AG04450 (cell line): ENCODE measurements at regions of chr2 and their contacts with region 1.

Region 1: DNA sequence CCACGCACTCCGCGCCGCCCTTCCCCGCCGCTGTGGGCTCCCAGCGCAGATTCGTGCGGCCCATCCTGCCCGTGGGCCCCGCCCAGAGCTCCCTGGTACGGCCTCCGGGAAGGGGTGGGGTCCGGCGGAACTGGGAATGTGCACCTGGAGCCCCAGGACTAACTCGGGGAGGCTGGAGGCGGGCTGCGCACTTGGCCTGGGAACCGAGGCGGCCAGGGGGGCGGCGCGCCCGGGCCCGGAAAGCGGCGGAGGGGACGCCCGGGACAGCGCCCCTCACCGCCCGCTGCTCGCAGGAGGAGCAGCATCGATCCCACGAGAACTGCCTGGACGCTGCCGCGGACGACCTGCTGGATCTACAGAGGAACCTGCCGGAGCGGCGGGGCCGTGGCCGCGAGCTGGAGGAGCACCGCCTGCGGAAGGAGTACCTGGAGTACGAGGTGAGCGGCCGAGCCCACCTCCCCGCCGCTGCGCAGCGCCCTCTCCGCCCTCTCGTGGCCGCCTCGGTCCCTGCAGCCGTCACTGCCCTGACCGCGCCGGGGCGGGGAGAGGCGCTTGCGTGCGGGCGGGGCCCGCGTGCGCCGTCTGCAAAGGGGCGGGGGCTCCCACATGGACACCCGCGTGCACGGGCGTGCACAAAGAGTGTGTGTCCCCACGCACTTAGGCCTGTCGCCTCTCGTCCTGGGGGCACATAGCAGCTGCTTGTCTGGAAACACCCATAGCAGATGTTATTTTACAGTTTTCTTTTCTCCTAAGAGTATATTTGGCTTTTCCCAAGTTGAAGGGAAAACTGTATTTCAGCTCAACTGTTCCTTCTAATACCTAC is 25.2 kb downstream of the PSD4 start:
- DNase-seq: no peak
- H3K4me3 ChIP-seq: peak overlapping the region; percentile 71
- H3K27ac ChIP-seq: no peak overlapping the region
- H3K27me3 ChIP-seq: peaks cover 18% of the 10 kb centered on the region
- CTCF ChIP-seq: peak; percentile 78

Region 2: DNA sequence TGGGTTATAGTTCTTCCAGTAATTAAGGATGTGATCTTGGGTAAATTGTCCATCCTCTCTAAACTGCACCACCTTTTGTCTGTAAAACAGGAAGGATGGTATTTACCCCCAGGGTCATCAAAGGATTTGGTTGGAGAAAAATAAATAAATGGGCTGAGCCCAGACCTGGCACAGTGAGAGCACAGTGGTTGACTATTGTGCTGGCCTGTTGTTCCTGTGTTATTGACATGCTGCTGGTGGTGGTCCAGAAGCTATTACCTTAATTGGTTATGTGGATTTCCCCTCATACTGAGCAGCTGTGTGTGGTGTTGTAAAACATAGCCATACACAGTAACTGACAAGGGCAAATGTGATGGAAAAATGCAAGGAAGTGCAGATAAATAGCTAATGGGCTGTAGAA is 288.8 kb before region 1 on chr2:
- CTCF ChIA-PET with region 1: no interaction called
- POLR2A ChIA-PET with region 1: no interaction called
- DNase-seq: no peak
- H3K4me3 ChIP-seq: no peak overlapping the region
- H3K27ac ChIP-seq: no peak overlapping the region
- H3K27me3 ChIP-seq: no peaks in the 10 kb centered on the region
- CTCF ChIP-seq: no peak

Region 3: DNA sequence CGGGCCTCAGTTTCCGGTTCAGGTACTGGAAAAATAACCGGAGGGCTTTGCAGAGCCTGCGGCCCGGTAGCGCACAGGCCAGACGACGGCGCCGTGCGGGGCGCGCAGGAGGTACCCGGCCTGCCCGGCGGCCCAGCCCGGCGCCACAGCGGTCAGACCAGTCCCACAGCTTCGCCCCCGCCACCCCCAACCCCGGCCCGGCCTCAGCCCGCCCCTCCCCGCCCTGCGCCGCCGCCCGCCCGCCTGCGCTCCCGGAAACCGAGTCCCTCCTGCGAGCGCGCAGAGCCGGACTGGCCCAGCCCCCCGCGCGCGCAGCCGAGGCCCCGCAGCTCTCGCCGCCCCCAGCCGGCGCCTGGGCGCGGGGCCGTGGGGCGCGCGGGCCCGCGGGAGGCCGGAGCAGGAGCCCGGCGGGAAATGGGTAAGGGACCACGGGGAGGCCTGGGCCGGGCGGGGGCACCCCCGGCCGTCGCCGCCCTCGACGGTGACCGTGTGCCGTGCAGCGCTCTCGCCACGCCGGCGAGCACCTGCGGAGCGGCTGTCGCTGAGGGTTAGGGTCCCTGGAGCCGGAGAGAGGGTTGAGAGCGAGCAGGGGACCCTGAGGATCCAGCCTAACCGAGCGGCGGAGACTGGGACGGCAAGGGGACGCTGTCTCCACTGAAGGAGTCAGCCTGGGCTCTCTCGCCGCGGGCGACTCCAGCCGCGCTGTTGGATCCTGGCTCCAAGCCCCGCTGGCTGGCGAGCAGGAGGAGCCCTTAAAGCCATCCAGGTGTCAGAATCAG is 41.7 kb before region 1 on chr2:
- CTCF ChIA-PET with region 1: interaction called, 10 read pairs
- POLR2A ChIA-PET with region 1: no interaction called
- DNase-seq: no peak
- H3K4me3 ChIP-seq: peak overlapping the region; percentile 35
- H3K27ac ChIP-seq: no peak overlapping the region
- H3K27me3 ChIP-seq: peaks cover 30% of the 10 kb centered on the region
- CTCF ChIP-seq: no peak

Region 4: GRCh38 chr2:113217455-113218282 is 18.7 kb after region 1 on chr2:
- CTCF ChIA-PET with region 1: interaction called, 14 read pairs
- POLR2A ChIA-PET with region 1: no interaction called
- DNase-seq: no peak
- H3K4me3 ChIP-seq: no peak overlapping the region
- H3K27ac ChIP-seq: no peak overlapping the region
- H3K27me3 ChIP-seq: no peaks in the 10 kb centered on the region
- CTCF ChIP-seq: no peak

Region 5: GRCh38 chr2:113240150-113240862 is 41.3 kb after region 1 on chr2:
- CTCF ChIA-PET with region 1: interaction called, 34 read pairs
- POLR2A ChIA-PET with region 1: no interaction called
- DNase-seq: peak; percentile 83
- H3K4me3 ChIP-seq: peak overlapping the region; percentile 10
- H3K27ac ChIP-seq: peak overlapping the region; percentile 95
- H3K27me3 ChIP-seq: no peaks in the 10 kb centered on the region
- CTCF ChIP-seq: 0 out of 2 replicates have a peak, but pooled peaks have one; percentile 10

Region 6: DNA sequence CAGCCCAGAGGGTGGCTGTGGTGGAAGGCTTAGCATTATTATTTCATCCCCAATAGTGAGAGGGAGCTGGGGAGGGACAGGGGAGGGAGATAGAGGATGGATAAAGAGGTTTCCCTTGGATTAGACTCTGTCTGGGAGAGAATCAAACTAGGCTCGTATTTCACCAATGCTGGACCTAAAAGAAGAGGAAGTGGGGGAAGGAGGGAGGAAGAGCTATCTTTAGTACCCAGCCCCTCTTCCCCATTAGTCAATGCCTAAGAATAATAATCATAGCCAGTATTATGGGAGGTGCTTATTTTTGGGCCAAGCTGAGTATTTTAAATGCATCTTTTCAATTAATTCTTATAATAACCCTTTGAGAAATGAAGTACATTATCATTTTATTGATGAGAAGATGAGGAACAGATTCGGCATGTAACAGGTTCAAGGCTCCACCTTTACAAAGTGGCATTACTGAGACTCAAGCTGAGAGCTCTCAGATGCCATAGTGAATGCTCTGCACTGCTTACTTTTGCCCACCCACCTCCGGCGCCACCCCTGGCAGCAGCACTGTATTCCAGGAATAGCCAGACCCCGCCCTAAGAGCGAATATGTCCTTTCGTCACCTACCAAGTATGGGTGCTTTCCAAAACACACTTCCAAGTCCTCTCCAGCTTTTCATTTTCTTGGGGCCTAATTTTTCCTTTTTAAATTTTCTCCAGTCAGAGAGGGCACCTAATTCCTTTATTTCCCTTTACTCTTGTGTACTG is 58.7 kb after region 1 on chr2:
- CTCF ChIA-PET with region 1: interaction called, 11 read pairs
- POLR2A ChIA-PET with region 1: no interaction called
- DNase-seq: no peak
- H3K4me3 ChIP-seq: no peak overlapping the region
- H3K27ac ChIP-seq: no peak overlapping the region
- H3K27me3 ChIP-seq: no peaks in the 10 kb centered on the region
- CTCF ChIP-seq: no peak